ENCODE measurements at regions of chr3 and their contacts with region 1.

Region 1: GRCh38 chr3:107429320-107430181 is 52.3 kb downstream of the CCDC54 start:
- DNase-seq: peak; percentile 80 to 92
- ATAC-seq: peak; percentile 69 to 87
- H3K4me3 ChIP-seq: peak overlapping the region; percentile 59
- H3K27ac ChIP-seq: peak overlapping the region; percentile 74 to 95
- H3K4me1 ChIP-seq: peaks cover 16% of the 10 kb centered on the region
- CTCF ChIP-seq: peak; percentile 85
- EP300 ChIP-seq: no peak
- POLR2A ChIP-seq: peak; percentile 50
- RAD21 ChIP-seq: peak; percentile 71

Region 2: GRCh38 chr3:107222907-107223306 is 206.6 kb before region 1 on chr3:
- CTCF ChIA-PET with region 1: interaction called, 10 read pairs
- POLR2A ChIA-PET with region 1: no interaction called
- DNase-seq: no peak
- ATAC-seq: no peak
- H3K4me3 ChIP-seq: no peak overlapping the region
- H3K27ac ChIP-seq: no peak overlapping the region
- H3K4me1 ChIP-seq: peaks cover 15% of the 10 kb centered on the region; the same call in 2 of the 3 replicates
- CTCF ChIP-seq: no peak
- EP300 ChIP-seq: no peak
- POLR2A ChIP-seq: no peak
- RAD21 ChIP-seq: no peak

Region 3: GRCh38 chr3:107284612-107285011 is 144.9 kb before region 1 on chr3:
- CTCF ChIA-PET with region 1: interaction called, 14 read pairs
- POLR2A ChIA-PET with region 1: no interaction called
- DNase-seq: no peak
- ATAC-seq: no peak
- H3K4me3 ChIP-seq: no peak overlapping the region
- H3K27ac ChIP-seq: peak overlapping the region in 1 of 2 experiments; percentile 42; a peak in 1 of 6 replicates
- H3K4me1 ChIP-seq: peaks cover 14% of the 10 kb centered on the region; the same call in 2 of the 3 replicates
- CTCF ChIP-seq: no peak
- EP300 ChIP-seq: no peak
- POLR2A ChIP-seq: no peak
- RAD21 ChIP-seq: no peak

Region 4: DNA sequence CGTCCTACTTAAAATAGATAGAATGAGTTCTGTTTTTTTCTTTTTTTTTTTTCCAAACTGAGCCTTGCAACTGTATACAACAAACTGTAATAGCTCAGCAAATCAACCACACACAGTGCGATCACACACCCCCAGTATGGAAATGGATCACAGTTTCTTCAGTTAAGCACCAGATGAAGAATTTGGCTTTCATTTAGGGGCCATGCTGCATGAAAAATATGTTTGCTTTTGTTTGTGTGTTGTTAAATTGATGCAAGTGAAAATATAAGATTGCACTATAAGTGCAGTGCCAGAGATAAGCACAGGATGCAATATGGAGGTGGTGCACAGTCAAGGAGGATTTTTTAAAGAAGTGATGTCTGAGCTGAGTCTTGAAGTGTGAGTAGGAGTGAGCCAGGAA is 34.5 kb before region 1 on chr3:
- CTCF ChIA-PET with region 1: no interaction called
- POLR2A ChIA-PET with region 1: no interaction called
- DNase-seq: no peak
- ATAC-seq: no peak
- H3K4me3 ChIP-seq: no peak overlapping the region
- H3K27ac ChIP-seq: no peak overlapping the region
- H3K4me1 ChIP-seq: no peaks in the 10 kb centered on the region
- CTCF ChIP-seq: no peak
- EP300 ChIP-seq: no peak
- POLR2A ChIP-seq: no peak
- RAD21 ChIP-seq: no peak

Region 5: GRCh38 chr3:107407355-107407754 is 22.2 kb before region 1 on chr3:
- CTCF ChIA-PET with region 1: interaction called, 13 read pairs
- POLR2A ChIA-PET with region 1: interaction called, 3 read pairs
- DNase-seq: no peak
- ATAC-seq: no peak
- H3K4me3 ChIP-seq: no peak overlapping the region
- H3K27ac ChIP-seq: no peak overlapping the region
- H3K4me1 ChIP-seq: no peaks in the 10 kb centered on the region
- CTCF ChIP-seq: no peak
- EP300 ChIP-seq: no peak
- POLR2A ChIP-seq: no peak
- RAD21 ChIP-seq: no peak

Region 6: DNA sequence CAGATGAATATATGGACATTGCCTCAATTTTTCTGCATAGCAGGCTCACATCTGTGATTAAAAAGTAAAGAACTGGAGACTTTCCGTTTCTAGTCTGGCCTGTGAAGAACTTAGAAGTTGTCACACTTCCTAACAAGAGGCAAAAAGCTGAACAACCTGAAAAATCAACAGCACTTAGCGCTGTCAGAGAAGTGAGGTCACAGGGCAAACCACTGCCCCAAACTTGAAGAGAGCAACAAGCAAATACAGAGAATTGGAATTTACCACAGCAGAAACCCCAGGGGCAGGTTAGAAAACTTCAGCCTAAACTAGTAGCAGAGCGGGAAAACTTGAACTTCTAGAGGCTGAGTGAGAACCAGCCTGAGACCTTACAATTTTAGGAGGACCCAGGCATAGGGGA is 13.4 kb before region 1 on chr3:
- CTCF ChIA-PET with region 1: interaction called, 30 read pairs
- POLR2A ChIA-PET with region 1: interaction called, 13 read pairs
- DNase-seq: no peak
- ATAC-seq: no peak
- H3K4me3 ChIP-seq: no peak overlapping the region
- H3K27ac ChIP-seq: no peak overlapping the region
- H3K4me1 ChIP-seq: no peaks in the 10 kb centered on the region
- CTCF ChIP-seq: no peak
- EP300 ChIP-seq: no peak
- POLR2A ChIP-seq: no peak
- RAD21 ChIP-seq: no peak

Region 7: DNA sequence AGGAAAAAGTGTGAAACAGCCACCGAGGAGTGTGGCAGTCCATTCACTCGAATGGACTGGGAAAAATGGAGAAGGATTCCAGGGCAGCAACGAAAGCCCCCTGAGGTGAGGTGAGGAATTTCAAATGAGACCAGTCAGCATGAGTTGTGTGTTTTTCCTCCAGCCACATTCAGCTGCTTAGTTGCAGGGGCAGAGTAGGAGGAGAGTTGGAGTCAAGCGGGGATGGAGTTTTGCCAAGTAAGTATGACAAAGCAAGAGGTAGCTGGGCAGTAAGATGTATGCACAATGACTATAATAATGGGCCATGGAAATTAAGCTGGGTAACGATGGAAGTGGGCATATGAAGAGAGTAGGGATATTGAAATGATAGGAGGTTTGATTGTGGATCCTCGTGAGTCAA is 12.1 kb after region 1 on chr3:
- CTCF ChIA-PET with region 1: interaction called, 16 read pairs
- POLR2A ChIA-PET with region 1: interaction called, 3 read pairs
- DNase-seq: peak in 1 of 2 experiments; percentile 16
- ATAC-seq: no peak
- H3K4me3 ChIP-seq: no peak overlapping the region
- H3K27ac ChIP-seq: no peak overlapping the region
- H3K4me1 ChIP-seq: no peaks in the 10 kb centered on the region
- CTCF ChIP-seq: no peak
- EP300 ChIP-seq: no peak
- POLR2A ChIP-seq: no peak
- RAD21 ChIP-seq: no peak

Region 8: DNA sequence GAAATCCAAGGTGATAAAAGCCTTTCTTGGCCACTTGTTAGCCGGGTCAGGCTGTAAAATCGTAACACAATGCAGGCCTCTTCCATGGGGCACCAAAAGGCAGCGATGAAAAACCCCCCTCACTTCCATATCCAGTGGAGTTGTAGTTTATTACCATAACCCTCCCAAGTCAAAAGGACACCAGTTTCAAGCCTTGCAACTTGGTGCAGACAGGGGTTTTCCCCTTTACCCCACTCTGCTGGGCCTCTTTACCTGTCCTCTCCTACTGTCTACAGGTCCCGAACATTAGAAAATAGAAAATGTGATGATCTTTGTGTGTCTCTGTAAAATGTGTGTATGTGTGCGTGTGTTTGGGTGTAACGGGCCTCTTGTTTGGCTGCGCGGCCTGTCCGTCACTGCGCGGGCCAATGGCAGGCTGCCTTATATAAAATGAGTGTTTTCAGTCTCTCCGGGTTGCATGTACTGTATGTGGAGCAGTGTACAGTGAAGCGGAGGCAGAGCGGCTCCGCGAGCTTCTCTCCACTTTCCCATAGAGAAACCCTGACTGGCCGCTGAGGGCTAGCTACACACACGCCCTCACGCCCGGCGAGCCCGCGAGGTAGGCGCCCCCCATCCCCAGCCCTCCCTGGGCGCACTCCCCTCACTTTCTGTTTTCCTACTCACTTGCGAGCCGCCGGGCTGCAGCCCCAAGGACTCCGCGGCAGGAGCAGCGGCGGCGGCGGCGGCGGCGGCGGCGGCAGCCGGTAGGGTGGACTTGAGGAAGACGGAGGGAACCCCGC is 93.1 kb after region 1 on chr3 and contains the start of gene BBX:
- CTCF ChIA-PET with region 1: interaction called, 3 read pairs
- POLR2A ChIA-PET with region 1: interaction called, 19 read pairs
- DNase-seq: peak; percentile 84 to 98
- ATAC-seq: peak; percentile 85 to 96
- H3K4me3 ChIP-seq: peak within 1 kb of the TSS; percentile 94
- H3K27ac ChIP-seq: peak within 1 kb of the TSS; percentile 76 to 93
- H3K4me1 ChIP-seq: peaks cover 11% of the 10 kb centered on the region; the same call in 2 of the 3 replicates
- CTCF ChIP-seq: no peak
- EP300 ChIP-seq: no peak
- POLR2A ChIP-seq: peak; percentile 66
- RAD21 ChIP-seq: no peak
- polyA plus RNA-seq, gene BBX: 55.7 and 62.8 TPM in 2 replicates